Mammary epithelial cell (primary cell): ENCODE measurements at regions of chr11 and their contacts with region 1.

Region 1: DNA sequence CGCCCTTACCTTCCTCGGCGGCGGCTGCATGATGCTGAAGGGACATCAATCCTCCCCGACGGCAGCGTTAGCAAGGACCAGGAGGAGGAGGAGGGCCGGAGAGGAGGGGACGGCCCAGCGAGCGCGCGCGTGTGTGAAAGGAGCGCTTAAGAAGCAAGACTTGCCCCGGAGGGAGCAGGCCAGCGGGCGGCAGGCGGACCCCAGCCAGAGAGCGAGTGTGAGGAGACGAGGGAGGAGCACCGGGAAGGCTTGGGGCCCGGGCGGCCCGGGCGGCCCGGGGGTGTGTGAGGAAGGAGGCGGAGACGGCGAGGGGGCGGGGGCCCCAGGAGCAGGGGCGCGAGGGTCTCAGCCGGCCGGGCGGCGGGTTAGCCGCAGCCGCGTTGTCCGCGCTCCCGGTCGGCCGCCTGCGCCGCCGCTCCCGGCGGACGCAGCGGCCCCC is 251 bp downstream of the FCHSD2 start:
- DNase-seq: peak; percentile 64
- H3K4me3 ChIP-seq: peak overlapping the region; percentile 92 to 99 (median 98)
- H3K27ac ChIP-seq: peak overlapping the region; percentile 49
- H3K4me1 ChIP-seq: peaks cover 20% of the 10 kb centered on the region
- H3K27me3 ChIP-seq: no peaks in the 10 kb centered on the region
- CTCF ChIP-seq: no peak

Region 2: DNA sequence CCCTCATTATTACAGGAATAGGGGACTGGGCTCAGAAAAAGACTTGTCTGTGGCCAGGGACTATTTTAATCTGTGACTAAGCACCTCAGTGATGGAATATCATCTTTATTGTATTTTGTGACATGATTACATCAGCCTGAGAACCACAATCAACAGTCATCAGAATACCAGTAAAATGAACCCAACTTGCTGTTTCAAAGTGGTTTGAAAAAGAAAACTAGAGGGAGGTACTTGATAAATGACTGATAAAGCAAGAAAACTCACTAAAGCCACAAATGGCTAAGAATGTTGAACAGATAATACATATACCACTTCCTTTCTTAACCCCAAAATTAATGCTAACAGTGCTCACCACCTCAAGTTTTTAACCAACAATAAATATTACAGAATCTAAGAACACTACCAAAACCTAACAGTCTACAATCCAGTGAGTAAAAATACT is 172.0 kb before region 1 on chr11:
- CTCF ChIA-PET with region 1: no interaction called
- dilution Hi-C with region 1: no loop called
- in situ Hi-C with region 1: no loop called
- intact Hi-C with region 1: loop called (anchors 5 kb)
- DNase-seq: peak; percentile 76
- H3K4me3 ChIP-seq: no peak overlapping the region
- H3K27ac ChIP-seq: no peak overlapping the region
- H3K4me1 ChIP-seq: peaks cover 7% of the 10 kb centered on the region
- H3K27me3 ChIP-seq: no peaks in the 10 kb centered on the region
- CTCF ChIP-seq: no peak

Region 3: GRCh38 chr11:73059915-73060314 is 82.0 kb before region 1 on chr11:
- CTCF ChIA-PET with region 1: no interaction called
- dilution Hi-C with region 1: loop called (anchors 5 kb)
- in situ Hi-C with region 1: no loop called
- intact Hi-C with region 1: no loop called
- DNase-seq: peak; percentile 5
- H3K4me3 ChIP-seq: no peak overlapping the region
- H3K27ac ChIP-seq: no peak overlapping the region
- H3K4me1 ChIP-seq: no peaks in the 10 kb centered on the region
- H3K27me3 ChIP-seq: no peaks in the 10 kb centered on the region
- CTCF ChIP-seq: no peak

Region 4: GRCh38 chr11:73288873-73289707 is 147.2 kb after region 1 on chr11:
- CTCF ChIA-PET with region 1: no interaction called
- dilution Hi-C with region 1: no loop called
- in situ Hi-C with region 1: no loop called
- intact Hi-C with region 1: loop called (anchors 1 kb)
- DNase-seq: peak; percentile 87
- H3K4me3 ChIP-seq: no peak overlapping the region
- H3K27ac ChIP-seq: peak overlapping the region; percentile 30
- H3K4me1 ChIP-seq: peaks cover 15% of the 10 kb centered on the region
- H3K27me3 ChIP-seq: no peaks in the 10 kb centered on the region
- CTCF ChIP-seq: peak; percentile 81 to 98